ENCODE measurements at regions of chr9 and their contacts with region 1.

Region 1: DNA sequence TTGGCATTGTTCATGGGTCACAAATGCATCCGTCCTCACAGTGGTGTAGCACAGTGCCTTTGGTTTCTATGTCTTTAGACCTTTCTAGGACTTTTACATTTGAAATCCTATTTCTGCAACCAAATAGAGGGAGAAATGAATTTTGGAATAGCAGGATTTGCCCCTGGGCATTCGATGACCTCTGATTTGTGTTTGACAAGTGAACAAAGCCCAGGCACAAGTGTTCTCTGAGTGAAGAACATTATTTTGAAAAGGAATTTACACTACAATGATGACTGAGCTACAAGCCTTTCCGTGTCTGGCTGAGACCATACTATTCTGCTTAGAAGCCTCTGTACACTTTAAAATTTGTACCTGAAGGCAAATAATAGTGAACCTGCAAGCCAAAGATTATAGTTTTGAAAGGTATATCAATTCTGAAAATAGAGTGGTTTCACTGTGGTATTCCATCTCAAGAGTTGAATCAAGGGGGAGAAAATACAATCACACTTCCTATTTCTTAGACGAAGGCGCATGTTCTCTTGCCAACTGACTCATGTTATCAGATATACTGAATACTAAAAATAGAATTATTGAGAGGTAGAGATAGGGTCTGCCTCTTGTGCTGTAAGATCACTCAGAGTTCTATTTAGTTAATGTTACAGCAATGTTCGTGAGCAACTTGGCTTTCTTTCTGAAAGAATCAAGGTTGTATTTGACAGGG is 297.6 kb downstream of the KDM4C start:
- DNase-seq: peak; percentile 34
- H3K4me3 ChIP-seq: no peak overlapping the region
- H3K27ac ChIP-seq: no peak overlapping the region
- H3K4me1 ChIP-seq: no peaks in the 10 kb centered on the region
- H3K27me3 ChIP-seq: no peaks in the 10 kb centered on the region
- CTCF ChIP-seq: no peak
- POLR2A ChIP-seq: no peak

Region 2: GRCh38 chr9:6733257-6733656 is 322.1 kb before region 1 on chr9:
- CTCF ChIA-PET with region 1: no interaction called
- POLR2A ChIA-PET with region 1: no interaction called
- dilution Hi-C with region 1: no loop called
- intact Hi-C with region 1: no loop called
- DNase-seq: no peak
- H3K4me3 ChIP-seq: no peak overlapping the region
- H3K27ac ChIP-seq: no peak overlapping the region
- H3K4me1 ChIP-seq: no peaks in the 10 kb centered on the region
- H3K27me3 ChIP-seq: no peaks in the 10 kb centered on the region
- CTCF ChIP-seq: no peak
- POLR2A ChIP-seq: no peak

Region 3: GRCh38 chr9:6944093-6944551 is 111.2 kb before region 1 on chr9:
- CTCF ChIA-PET with region 1: interaction called, 12 read pairs
- POLR2A ChIA-PET with region 1: no interaction called
- dilution Hi-C with region 1: no loop called
- intact Hi-C with region 1: no loop called
- DNase-seq: peak; percentile 80
- H3K4me3 ChIP-seq: no peak overlapping the region
- H3K27ac ChIP-seq: peak overlapping the region; percentile 20
- H3K4me1 ChIP-seq: peaks cover 19% of the 10 kb centered on the region
- H3K27me3 ChIP-seq: no peaks in the 10 kb centered on the region
- CTCF ChIP-seq: no peak
- POLR2A ChIP-seq: no peak

Region 4: DNA sequence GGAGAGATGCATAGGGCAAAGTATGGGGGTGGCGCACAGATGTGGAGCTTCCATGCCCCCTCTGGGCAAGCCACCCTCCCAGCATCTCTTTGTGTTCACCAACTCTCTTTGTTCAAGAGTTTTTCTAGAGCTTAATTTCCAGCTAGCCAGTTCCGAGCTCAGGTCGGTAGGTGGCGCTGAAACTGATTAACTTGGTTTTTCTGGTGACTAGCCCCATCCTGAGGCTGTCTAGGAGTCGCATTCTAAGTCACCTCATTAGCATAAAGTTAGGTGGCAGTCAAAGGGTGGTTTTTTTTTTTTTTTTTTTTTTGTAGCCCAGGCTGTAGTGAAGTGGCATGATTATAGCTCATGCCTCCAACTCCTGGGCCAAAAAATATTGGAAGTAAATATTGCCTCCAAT is 178.8 kb after region 1 on chr9:
- CTCF ChIA-PET with region 1: interaction called, 23 read pairs
- POLR2A ChIA-PET with region 1: no interaction called
- dilution Hi-C with region 1: no loop called
- intact Hi-C with region 1: no loop called
- DNase-seq: peak; percentile 43
- H3K4me3 ChIP-seq: no peak overlapping the region
- H3K27ac ChIP-seq: no peak overlapping the region
- H3K4me1 ChIP-seq: no peaks in the 10 kb centered on the region
- H3K27me3 ChIP-seq: peaks cover 0 to 2% of the 10 kb centered on the region in 2 experiments
- CTCF ChIP-seq: peak; percentile 57 to 65
- POLR2A ChIP-seq: no peak

Region 5: GRCh38 chr9:7570107-7570720 is 514.9 kb after region 1 on chr9:
- CTCF ChIA-PET with region 1: interaction called, 4 read pairs
- POLR2A ChIA-PET with region 1: no interaction called
- dilution Hi-C with region 1: no loop called
- intact Hi-C with region 1: loop called (anchors 1 kb)
- DNase-seq: peak; percentile 58
- H3K4me3 ChIP-seq: no peak overlapping the region
- H3K27ac ChIP-seq: no peak overlapping the region
- H3K4me1 ChIP-seq: no peaks in the 10 kb centered on the region
- H3K27me3 ChIP-seq: no peaks in the 10 kb centered on the region
- CTCF ChIP-seq: peak; percentile 79
- POLR2A ChIP-seq: no peak

Measured in endothelial cell of umbilical vein (primary cell).